Activated CD8-positive, alpha-beta T cell treated with anti-CD3 and anti-CD28 coated beads for 36 hours (primary cell): ENCODE measurements at regions of chr10 and their contacts with region 1.

Region 1: GRCh38 chr10:3757638-3758490 is 27.1 kb downstream of the KLF6 start:
- DNase-seq: peak; percentile 78
- ATAC-seq: peak; percentile 81
- H3K4me3 Mint-ChIP-seq: peak overlapping the region; percentile 59
- H3K27ac Mint-ChIP-seq: peak overlapping the region; percentile 98
- H3K4me1 Mint-ChIP-seq: peaks cover 79% of the 10 kb centered on the region
- H3K27me3 Mint-ChIP-seq: no peaks in the 10 kb centered on the region
- CTCF ChIP-seq: no peak

Region 2: GRCh38 chr10:3623746-3624145 is 134.1 kb before region 1 on chr10:
- CTCF ChIA-PET with region 1: no interaction called
- POLR2A ChIA-PET with region 1: no interaction called
- intact Hi-C with region 1: loop called (anchors 10 kb)
- DNase-seq: no peak
- ATAC-seq: no peak
- H3K4me3 Mint-ChIP-seq: no peak overlapping the region
- H3K27ac Mint-ChIP-seq: peak overlapping the region; percentile 80
- H3K4me1 Mint-ChIP-seq: peaks cover 31% of the 10 kb centered on the region
- H3K27me3 Mint-ChIP-seq: peaks cover 1% of the 10 kb centered on the region
- CTCF ChIP-seq: no peak

Region 3: DNA sequence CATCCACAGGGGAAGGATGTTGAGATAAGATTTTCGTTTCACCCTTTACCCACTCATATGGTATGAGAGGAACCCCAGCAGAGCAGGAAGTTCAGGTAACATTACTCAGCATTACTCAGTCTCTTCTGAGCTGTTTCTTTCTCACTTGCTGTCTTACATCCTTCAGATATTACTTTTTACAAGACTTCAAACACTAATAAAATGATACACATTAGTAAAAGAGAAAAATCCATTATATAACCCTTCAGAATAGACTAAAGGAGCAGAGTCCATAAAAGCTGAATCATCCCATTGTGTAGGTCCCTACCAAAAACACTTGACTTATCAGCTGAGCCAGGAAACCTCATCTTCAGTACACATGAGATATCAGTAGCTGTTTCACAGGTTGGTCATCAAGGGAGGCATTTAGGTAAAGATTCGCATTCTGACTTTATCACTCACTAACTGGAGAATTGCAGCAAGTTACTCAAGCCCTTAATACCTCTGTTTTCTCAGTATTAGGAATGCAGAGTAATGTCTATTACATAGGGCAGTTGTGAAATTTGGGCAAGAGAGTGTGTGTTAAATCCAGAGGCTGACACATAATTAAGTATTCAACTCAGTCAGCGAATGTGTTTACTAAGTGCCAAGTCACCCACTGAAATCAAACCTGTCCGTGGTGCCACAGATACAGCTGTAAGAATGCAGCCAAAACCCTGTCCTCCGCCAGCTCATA is 17.6 kb before region 1 on chr10:
- CTCF ChIA-PET with region 1: interaction called, 6 read pairs
- POLR2A ChIA-PET with region 1: interaction called, 12 read pairs
- intact Hi-C with region 1: no loop called
- DNase-seq: no peak
- ATAC-seq: peak; percentile 86
- H3K4me3 Mint-ChIP-seq: no peak overlapping the region
- H3K27ac Mint-ChIP-seq: peak overlapping the region; percentile 60
- H3K4me1 Mint-ChIP-seq: peaks cover 27% of the 10 kb centered on the region
- H3K27me3 Mint-ChIP-seq: no peaks in the 10 kb centered on the region
- CTCF ChIP-seq: no peak

Region 4: GRCh38 chr10:3776796-3777571 is 19.1 kb after region 1 on chr10:
- CTCF ChIA-PET with region 1: interaction called, 6 read pairs
- POLR2A ChIA-PET with region 1: interaction called, 77 read pairs
- intact Hi-C with region 1: no loop called
- DNase-seq: peak; percentile 76
- ATAC-seq: peak; percentile 66
- H3K4me3 Mint-ChIP-seq: peak overlapping the region; percentile 56
- H3K27ac Mint-ChIP-seq: peak overlapping the region; percentile 85
- H3K4me1 Mint-ChIP-seq: peaks cover 71% of the 10 kb centered on the region
- H3K27me3 Mint-ChIP-seq: no peaks in the 10 kb centered on the region
- CTCF ChIP-seq: no peak